ENCODE measurements at regions of chr1 and their contacts with region 1.

Region 1: DNA sequence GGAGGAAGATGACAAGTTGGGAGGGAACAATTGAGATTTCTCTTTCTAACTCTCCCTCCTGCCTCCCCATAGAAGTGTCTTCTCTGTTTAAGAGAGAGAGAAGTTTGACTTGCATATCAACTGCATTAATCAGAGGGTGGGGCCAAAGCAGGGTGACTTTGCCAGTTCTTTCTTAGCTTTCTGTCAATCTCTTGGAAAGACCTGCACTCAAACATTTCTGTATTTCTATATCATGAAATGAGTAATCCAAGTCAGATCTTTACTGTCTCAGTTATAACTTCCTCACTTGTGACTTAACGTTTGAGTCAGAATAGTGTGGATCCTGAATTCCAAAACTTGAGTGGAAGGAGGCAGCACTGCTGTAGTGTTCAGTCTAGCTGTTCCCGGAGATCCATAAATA is 180.8 kb upstream of the KCNK2 start:
- DNase-seq: no peak
- H3K4me3 ChIP-seq: no peak overlapping the region
- H3K27ac ChIP-seq: no peak overlapping the region
- H3K4me1 ChIP-seq: no peaks in the 10 kb centered on the region
- H3K27me3 ChIP-seq: no peaks in the 10 kb centered on the region
- CTCF ChIP-seq: no peak
- EP300 ChIP-seq: no peak
- POLR2A ChIP-seq: no peak

Region 2: DNA sequence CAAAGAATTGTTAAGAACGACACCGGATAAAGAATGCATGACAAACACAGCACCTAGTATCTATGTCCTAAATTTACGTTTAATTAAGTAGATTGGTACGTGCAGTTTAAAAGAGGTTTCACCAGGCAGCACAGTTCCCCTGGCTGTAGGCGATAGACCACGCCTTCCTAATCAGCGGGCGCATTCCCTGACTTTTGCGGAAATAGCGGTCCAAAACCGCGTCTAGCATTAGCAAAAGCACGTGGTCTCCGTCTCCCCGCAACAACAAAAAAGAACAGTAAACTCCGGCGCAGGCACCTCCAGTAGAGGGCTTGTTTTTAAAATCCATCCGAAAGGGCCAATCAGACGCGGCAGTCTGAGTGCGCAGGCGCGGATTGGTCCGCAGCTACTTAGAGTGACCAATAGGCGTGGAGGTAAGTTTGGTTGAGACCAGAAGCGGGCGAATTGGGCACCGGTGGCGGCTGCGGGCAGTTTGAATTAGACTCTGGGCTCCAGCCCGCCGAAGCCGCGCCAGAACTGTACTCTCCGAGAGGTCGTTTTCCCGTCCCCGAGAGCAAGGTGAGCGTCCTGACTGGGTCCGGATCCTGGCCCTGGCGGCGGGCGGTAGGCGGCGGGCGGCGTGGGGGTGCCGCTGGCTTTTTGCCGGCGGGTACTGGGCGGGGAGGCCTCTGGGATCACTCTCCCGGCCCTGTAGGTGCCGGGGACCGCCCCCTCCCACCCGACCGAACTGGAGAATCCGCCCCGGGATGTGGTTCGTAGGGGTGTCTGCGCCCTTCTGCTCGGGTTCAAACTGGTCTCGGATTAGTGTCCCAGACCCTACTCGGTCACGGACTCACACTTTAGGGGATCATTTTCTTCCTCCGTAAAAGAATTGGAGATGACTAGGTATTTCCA is 298.7 kb before region 1 on chr1 and contains the start of gene CENPF:
- intact Hi-C with region 1: no loop called
- DNase-seq: peak; percentile 90 to 97 (median 94)
- H3K4me3 ChIP-seq: peak within 1 kb of the TSS; percentile 87
- H3K27ac ChIP-seq: no peak within 1 kb of the TSS
- H3K4me1 ChIP-seq: peaks cover 2% of the 10 kb centered on the region
- H3K27me3 ChIP-seq: no peaks in the 10 kb centered on the region
- CTCF ChIP-seq: peak; percentile 11 to 53 (median 45)
- EP300 ChIP-seq: no peak
- POLR2A ChIP-seq: no peak
- total RNA-seq, gene CENPF: 0.45 to 2.3 (median 1.3) TPM

Region 3: DNA sequence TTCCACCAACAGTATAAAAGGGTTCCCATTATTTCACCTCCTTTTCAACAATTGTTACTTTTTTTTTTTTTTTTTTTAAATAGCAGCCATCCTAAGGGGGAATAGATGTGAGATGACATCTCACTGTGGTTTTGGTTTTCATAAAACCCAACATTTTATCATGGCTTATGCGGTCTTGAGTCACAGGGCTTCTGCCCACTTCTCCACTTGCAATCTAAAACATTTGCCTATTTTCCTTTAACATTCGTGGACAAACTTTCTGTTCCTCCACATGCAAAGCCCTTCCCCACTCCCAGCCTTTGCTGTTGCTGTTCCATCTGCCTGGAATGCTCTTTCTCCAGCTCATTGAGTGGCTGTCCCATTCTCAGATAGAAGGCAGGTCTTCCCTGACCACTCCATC is 58.9 kb before region 1 on chr1:
- intact Hi-C with region 1: no loop called
- DNase-seq: no peak
- H3K4me3 ChIP-seq: no peak overlapping the region
- H3K27ac ChIP-seq: no peak overlapping the region
- H3K4me1 ChIP-seq: no peaks in the 10 kb centered on the region
- H3K27me3 ChIP-seq: no peaks in the 10 kb centered on the region
- CTCF ChIP-seq: no peak
- EP300 ChIP-seq: no peak
- POLR2A ChIP-seq: no peak

Region 4: DNA sequence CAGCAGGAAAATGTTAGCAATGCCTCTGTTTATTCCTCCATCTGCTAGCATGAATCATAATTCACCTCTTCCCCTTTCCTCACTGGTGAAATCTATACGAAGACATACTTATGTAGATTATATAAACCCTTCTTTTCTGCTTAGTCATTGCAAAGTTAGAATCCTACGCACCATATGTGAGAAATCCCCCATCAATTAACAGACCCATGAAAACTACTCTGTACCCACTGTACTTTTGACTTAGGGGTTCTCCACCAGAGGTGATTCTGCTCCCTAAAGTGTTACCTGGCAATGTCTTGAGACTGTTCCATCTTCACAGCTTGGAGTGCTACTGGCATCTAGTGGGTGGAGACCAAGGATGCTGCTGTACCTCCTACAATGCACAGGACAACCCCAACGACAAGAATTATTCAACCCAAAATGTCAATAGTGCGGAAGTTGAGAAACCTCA is 615.7 kb after region 1 on chr1:
- intact Hi-C with region 1: loop called in 1 of 4 experiments (anchors 5 kb)
- DNase-seq: no peak
- H3K4me3 ChIP-seq: no peak overlapping the region
- H3K27ac ChIP-seq: no peak overlapping the region
- H3K4me1 ChIP-seq: no peaks in the 10 kb centered on the region
- H3K27me3 ChIP-seq: no peaks in the 10 kb centered on the region
- CTCF ChIP-seq: no peak
- EP300 ChIP-seq: no peak
- POLR2A ChIP-seq: no peak